Common myeloid progenitor, CD34-positive (primary cell): ENCODE measurements at regions of chr20 and their contacts with region 1.

Region 1: DNA sequence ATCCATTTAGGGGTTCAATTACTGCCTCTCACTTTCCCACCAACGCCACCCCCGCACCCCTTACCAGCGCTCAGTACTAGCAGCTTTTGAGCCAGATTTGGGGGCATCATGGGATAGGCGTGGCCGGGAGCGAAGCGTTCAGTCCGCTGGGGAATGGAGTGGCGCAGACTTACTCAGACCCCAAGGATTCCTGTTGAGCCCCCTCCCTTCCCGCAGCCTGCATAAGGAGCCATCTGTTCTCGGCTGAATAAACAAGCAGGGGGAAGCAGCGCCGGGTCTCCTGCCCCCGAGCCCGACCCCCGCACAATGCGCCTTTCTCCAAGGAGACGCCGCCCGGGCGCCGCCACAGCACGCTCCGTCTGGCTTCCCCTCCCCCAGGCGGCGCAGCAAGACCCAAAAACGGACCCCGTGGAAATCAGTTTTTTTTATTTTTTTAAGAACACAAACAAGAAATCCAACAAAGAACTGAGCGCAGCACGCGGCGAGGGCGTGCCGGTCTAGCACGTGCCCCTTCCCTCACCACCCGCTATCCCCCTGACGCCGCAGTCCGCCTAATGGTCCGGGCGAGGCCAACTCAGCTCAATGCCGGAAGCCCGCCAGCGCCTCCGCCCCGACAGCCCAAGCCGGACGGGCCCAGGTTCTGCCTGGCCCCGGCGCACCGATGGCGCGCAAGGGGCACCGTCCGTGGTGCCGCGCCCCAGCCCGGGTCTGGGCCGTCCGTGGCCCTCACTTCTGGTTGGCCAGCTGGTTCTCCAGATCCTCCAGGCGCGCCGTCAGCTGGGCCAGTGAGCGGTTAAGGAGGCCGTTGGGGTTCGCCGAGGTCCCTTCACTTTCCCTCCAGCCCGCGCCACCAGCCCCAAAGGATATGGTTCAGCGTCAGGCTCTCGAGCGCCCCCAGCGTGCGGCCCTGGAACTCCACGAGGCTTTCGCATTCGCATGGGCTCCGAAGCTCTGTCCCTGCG is 13.3 kb upstream of the RBPJL start:
- DNase-seq: peak; percentile 70 to 86 (median 84)
- H3K4me3 ChIP-seq: peak overlapping the region; percentile 13 to 75 (median 60)
- H3K27ac ChIP-seq: no peak overlapping the region
- H3K4me1 ChIP-seq: peaks cover 0 to 9% (median 8%) of the 10 kb centered on the region in 4 experiments
- H3K27me3 ChIP-seq: peaks cover 3 to 39% (median 16%) of the 10 kb centered on the region in 5 experiments

Region 2: DNA sequence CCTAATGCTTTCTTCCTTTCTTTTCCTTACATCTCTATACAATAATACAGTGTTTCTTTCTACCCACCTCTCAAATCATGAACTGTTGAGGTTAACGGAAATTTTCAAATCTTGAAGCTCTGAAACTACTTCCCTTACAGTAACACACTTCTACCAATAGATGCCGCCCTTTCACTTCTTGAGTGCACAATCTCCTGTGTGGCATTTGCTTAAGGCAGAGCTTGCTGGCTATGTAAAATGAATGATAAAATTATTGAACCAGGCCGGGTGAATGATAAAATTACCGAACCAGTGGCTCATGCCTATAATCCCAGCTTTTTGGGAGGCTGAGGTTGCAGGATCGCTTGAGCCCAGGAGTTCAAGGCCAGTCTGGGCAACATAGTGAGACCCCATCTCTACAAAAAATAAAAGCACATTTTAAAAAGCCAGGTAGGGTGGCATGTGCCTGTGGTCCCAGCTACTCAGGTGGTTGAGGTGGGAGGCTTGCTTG is 249.2 kb before region 1 on chr20:
- CTCF ChIA-PET with region 1: interaction called, 45 read pairs
- POLR2A ChIA-PET with region 1: no interaction called
- DNase-seq: peak; percentile 74 to 86 (median 85)
- H3K4me3 ChIP-seq: no peak overlapping the region
- H3K27ac ChIP-seq: no peak overlapping the region
- H3K4me1 ChIP-seq: peaks cover 0 to 15% (median 7%) of the 10 kb centered on the region in 4 experiments
- H3K27me3 ChIP-seq: no peaks in the 10 kb centered on the region

Region 3: DNA sequence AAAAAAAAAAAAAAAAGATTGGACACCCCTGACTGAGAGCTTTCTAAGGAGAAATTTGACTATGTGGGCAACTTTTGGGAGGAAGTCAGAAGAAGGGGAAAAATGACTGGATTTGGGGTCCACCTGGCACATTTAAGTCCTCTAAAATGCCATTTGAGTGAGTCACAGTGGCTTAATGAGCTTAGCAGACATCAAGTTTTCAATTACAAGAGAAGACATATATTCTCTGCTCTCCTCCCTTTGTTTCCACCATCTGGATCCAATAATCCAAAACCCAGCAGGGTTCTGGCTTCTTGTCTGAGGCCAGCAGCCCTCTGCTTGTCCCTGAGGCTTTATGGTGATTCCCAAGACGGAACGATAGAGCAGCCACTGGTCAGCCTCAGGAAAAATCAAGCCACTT is 111.7 kb before region 1 on chr20:
- CTCF ChIA-PET with region 1: no interaction called
- POLR2A ChIA-PET with region 1: no interaction called
- DNase-seq: no peak
- H3K4me3 ChIP-seq: no peak overlapping the region
- H3K27ac ChIP-seq: no peak overlapping the region
- H3K4me1 ChIP-seq: no peaks in the 10 kb centered on the region
- H3K27me3 ChIP-seq: no peaks in the 10 kb centered on the region

Region 4: DNA sequence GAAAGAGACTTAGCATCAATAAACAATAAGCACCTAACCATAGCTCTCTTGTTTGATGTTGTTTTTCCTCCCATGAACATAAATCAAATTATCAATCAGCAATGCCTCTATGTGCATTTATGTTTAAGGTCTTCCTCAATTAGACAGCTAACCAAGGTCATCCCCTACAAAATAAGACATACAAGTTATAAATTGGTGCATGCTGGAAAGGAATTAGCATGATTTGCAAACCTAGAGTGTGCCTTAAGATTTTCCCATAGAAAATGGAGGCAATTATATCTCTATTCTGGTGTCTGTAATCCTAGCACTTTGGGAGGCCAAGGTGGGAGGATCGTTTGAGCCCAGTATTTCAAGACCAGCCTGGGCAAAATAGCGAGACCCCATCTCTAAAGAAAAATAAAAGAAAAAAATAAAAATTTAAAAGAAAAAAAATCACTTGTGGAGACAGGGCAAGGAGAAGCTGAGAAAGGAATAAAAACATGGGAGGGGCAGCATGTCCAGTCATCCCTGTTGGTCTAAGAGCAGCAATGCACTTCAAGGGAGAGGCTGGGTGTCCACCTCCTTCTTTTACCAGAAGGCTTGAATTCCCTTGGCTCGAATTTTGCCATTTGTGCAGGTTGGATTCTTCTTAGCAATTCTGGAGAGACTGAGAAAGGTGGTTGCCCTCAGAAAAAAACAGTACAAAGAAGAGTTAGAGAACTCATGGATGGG is 29.6 kb before region 1 on chr20:
- CTCF ChIA-PET with region 1: no interaction called
- POLR2A ChIA-PET with region 1: no interaction called
- DNase-seq: no peak
- H3K4me3 ChIP-seq: no peak overlapping the region
- H3K27ac ChIP-seq: no peak overlapping the region
- H3K4me1 ChIP-seq: no peaks in the 10 kb centered on the region
- H3K27me3 ChIP-seq: peaks cover 0 to 7% (median 0%) of the 10 kb centered on the region in 5 experiments

Region 5: DNA sequence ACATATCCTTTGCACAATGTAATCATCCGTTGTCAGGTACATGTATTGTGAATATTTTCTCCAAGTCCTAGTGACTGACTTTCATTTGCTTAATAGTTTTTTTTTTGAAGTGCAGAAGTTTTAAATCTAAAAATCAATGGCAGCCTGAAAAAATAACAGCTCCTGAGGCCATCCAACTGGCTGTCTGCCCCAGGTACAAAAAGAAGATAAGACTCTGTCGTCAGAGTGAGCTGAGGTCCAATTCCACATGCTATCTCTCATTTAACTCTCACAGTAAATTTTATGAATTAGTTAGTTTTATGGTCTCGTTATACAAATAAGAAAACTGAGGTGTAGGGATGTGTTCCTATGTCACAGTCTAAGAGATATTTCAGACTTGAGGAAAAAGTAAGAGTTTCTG is 18.0 kb before region 1 on chr20:
- CTCF ChIA-PET with region 1: interaction called, 16 read pairs
- POLR2A ChIA-PET with region 1: no interaction called
- DNase-seq: no peak
- H3K4me3 ChIP-seq: no peak overlapping the region
- H3K27ac ChIP-seq: no peak overlapping the region
- H3K4me1 ChIP-seq: no peaks in the 10 kb centered on the region
- H3K27me3 ChIP-seq: peaks cover 0 to 8% (median 2%) of the 10 kb centered on the region in 5 experiments

Region 6: DNA sequence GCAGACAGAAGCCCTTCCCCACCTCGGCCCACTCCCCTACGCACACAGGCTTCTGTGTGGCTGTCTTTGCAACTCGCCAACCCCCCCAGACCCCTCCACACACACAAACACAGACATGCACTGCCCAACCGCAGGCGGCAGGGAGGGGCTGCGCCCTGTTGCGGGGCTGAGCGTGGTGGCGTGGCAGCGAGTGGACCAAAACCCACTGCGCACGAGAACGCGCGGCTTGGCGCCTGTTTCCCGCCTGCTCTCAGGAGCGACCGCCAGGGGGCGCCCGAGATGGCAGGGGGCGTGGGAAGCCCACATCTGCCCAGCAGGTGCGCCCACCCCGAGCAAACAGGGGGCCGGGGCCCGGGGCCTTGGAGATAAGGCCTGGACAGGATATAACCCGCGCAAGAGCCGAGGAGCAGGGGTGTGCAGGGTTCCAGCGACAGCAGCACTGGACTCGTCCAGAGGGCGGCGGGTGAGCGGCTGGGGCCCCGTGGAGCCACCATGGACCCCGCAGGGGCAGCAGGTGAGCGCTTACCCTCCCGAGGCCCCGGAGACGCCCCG is 13.2 kb after region 1 on chr20 and contains the start of gene RBPJL:
- CTCF ChIA-PET with region 1: interaction called, 43 read pairs
- POLR2A ChIA-PET with region 1: no interaction called
- DNase-seq: peak; percentile 23 to 51 (median 51)
- H3K4me3 ChIP-seq: peak within 1 kb of the TSS in 2 of 7 experiments; percentile 19 to 23
- H3K27ac ChIP-seq: no peak within 1 kb of the TSS
- H3K4me1 ChIP-seq: peaks cover 0 to 14% (median 3%) of the 10 kb centered on the region in 4 experiments
- H3K27me3 ChIP-seq: peaks cover 0 to 44% (median 16%) of the 10 kb centered on the region in 5 experiments

Region 7: DNA sequence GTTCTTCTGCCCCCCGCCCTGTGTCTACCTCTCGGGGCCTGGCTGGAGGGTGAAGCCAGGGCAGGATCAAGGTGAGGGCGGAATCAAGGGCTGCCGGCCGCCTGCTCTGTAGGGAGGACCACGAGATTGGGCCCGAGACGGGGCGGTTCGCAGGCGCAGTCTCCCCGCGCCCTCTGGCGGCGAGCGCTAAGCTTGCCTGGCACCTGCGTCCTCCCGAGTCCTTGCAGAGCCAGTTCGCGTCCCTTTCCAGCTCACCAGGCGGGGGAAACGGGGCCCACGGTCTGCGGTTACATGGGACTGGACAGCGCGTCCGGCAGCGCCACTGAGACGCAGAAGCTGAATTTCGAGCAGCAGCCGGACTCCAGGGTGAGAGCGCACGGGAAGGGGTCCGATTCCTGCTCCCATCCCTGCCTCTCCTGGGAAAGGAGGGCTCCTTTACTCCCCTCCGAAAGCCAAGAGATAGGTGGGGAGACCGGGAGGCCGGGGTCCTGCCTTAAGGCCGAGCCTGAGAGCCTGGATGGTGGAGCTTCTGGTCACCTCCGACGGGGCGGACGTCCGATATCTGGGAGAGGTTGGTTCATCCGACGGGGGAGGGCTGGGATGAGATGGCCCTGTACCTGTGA is 18.4 kb after region 1 on chr20:
- CTCF ChIA-PET with region 1: interaction called, 13 read pairs
- POLR2A ChIA-PET with region 1: no interaction called
- DNase-seq: peak; percentile 58 to 69 (median 68)
- H3K4me3 ChIP-seq: no peak overlapping the region
- H3K27ac ChIP-seq: no peak overlapping the region
- H3K4me1 ChIP-seq: peaks cover 0 to 9% (median 5%) of the 10 kb centered on the region in 4 experiments
- H3K27me3 ChIP-seq: peaks cover 0 to 60% (median 13%) of the 10 kb centered on the region in 5 experiments

Region 8: GRCh38 chr20:45337367-45338120 is 44.2 kb after region 1 on chr20:
- CTCF ChIA-PET with region 1: no interaction called
- POLR2A ChIA-PET with region 1: no interaction called
- DNase-seq: no peak
- H3K4me3 ChIP-seq: no peak overlapping the region
- H3K27ac ChIP-seq: no peak overlapping the region
- H3K4me1 ChIP-seq: peaks cover 0 to 7% (median 0%) of the 10 kb centered on the region in 4 experiments
- H3K27me3 ChIP-seq: no peaks in the 10 kb centered on the region

Region 9: GRCh38 chr20:45362804-45363610 is 69.7 kb after region 1 on chr20 and contains the start of gene SYS1:
- CTCF ChIA-PET with region 1: no interaction called
- POLR2A ChIA-PET with region 1: no interaction called
- DNase-seq: peak; percentile 98 to 99 (median 98)
- H3K4me3 ChIP-seq: peak within 1 kb of the TSS; percentile 59 to 92 (median 85)
- H3K27ac ChIP-seq: peak within 1 kb of the TSS; percentile 89 to 95
- H3K4me1 ChIP-seq: peaks cover 15 to 58% (median 44%) of the 10 kb centered on the region in 4 experiments
- H3K27me3 ChIP-seq: no peaks in the 10 kb centered on the region